Ovary (tissue), 10 donors: ENCODE measurements at regions of chr3 and their contacts with region 1.

Region 1: GRCh38 chr3:16600780-16601539 is 4.3 kb downstream of the DAZL start:
- DNase-seq: peak; percentile 72 to 88 (median 85)
- H3K4me3 ChIP-seq: no peak overlapping the region
- H3K27ac ChIP-seq: no peak overlapping the region
- H3K4me1 ChIP-seq: no peaks in the 10 kb centered on the region
- H3K27me3 ChIP-seq: no peaks in the 10 kb centered on the region
- CTCF ChIP-seq: peak; percentile 71 to 85 (median 83)
- EP300 ChIP-seq: no peak
- POLR2A ChIP-seq: no peak

Region 2: GRCh38 chr3:16668776-16669545 is 68.0 kb after region 1 on chr3:
- intact Hi-C with region 1: no loop called
- DNase-seq: no peak
- H3K4me3 ChIP-seq: no peak overlapping the region
- H3K27ac ChIP-seq: no peak overlapping the region
- H3K4me1 ChIP-seq: peaks cover under 1% of the 10 kb centered on the region
- H3K27me3 ChIP-seq: no peaks in the 10 kb centered on the region
- CTCF ChIP-seq: no peak
- EP300 ChIP-seq: no peak
- POLR2A ChIP-seq: no peak

Region 3: DNA sequence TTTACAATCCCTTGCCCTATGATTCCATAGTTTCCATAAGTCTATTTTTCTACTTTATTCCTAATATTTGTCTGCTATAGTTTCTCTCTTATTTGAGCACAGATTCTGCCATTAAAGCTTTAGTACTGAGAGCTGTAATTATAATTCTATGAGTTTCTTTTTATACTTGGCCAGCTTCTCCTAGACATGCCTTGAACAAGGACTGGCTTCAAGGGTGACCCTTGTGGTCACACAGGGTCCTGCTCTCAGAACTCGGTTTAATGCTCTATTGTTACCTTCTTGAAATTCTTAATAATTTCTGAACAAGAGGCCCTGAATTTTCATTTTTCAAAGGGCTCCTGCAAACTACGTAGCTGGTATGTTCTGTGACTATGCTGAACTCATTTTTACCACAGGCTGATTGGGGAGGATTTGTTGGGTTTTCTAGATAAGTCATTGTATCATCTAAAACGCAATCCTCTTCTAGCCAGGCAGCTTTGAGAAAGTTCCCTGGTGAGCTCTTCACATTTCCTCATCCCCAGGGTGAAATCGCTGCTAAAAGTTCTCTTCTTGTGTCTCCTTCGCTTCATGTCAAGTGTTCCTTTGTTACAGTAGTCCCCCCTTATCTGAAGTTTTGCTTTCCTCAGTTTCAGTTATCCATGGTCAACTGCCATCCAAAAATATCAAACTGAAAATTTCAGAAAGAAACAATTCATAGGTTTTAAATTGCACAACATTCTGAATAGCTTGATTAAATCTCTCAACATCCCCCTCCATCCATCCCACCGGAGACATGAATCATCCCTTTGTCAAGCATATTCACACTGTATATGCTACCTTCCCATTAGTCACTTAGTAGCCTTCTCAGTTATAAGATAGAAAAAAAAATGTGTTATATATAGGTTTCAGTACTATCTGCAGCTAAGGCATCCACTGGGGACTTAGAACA is 271.2 kb after region 1 on chr3:
- intact Hi-C with region 1: no loop called
- DNase-seq: no peak
- H3K4me3 ChIP-seq: no peak overlapping the region
- H3K27ac ChIP-seq: no peak overlapping the region
- H3K4me1 ChIP-seq: no peaks in the 10 kb centered on the region
- H3K27me3 ChIP-seq: no peaks in the 10 kb centered on the region
- CTCF ChIP-seq: no peak
- EP300 ChIP-seq: no peak
- POLR2A ChIP-seq: no peak

Region 4: DNA sequence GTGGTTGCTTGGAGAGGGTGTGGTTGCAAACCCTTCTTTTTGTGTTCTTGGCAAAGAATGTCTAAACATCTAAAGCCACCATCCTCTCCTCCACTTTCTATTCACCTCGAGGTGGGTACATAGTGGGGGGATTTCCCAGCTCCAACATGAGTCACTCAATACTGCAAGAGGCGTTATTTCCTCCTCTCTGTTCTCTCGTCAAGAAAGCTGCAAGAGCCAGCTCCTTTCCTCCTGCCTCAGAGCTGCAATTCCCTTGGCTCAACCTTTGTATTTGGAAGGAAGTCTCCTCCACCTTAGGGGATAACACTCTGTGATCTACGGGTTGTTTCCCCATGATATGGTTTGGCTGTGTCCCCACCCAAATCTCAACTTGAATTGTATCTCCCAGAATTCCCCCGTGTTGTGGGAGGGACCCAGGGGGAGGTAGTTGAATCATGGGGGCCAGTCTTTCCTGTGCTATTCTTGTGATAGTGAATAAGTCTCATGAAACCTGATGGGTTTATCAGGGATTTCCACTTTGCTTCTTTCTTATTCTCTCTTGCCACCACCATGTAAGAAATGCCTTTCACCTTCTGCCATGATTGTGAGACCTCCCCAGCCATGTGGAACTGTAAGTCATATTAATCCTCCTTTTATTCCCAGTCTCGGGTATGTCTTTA is 422.2 kb after region 1 on chr3:
- intact Hi-C with region 1: loop called in 1 of 4 experiments (anchors 10 kb)
- DNase-seq: no peak
- H3K4me3 ChIP-seq: no peak overlapping the region
- H3K27ac ChIP-seq: no peak overlapping the region
- H3K4me1 ChIP-seq: no peaks in the 10 kb centered on the region
- H3K27me3 ChIP-seq: no peaks in the 10 kb centered on the region
- CTCF ChIP-seq: no peak
- EP300 ChIP-seq: no peak
- POLR2A ChIP-seq: no peak

Region 5: DNA sequence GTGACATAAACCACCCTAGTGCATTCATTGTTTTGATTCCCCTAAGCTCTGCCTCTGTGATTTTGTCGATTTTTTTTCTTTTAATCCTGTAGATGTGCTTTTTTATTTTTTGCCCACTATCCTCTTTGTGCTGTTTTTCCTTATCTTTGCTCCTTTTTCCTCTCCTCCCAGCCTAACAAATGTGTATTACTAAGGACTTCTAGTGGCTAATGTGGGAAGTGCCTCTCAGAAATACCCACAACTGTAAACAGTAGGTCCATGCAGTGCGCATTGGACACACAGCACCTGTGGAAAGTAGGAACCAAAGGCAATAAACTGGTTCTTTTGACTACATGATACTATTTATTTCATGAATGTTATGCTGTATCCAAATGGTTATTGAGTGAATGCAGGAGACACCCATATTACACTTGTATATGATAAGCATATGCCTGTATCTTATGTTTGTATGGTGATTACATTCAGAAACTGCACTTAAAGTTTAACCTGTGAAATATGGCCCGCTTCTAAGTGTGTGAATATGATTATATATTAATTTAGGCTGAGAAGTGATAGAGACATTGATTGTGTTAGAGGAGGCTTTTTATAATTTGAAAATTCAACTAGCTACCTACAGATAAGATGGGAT is 431.6 kb after region 1 on chr3:
- intact Hi-C with region 1: loop called in 3 of 4 experiments (anchors 5 to 10 kb)
- DNase-seq: no peak
- H3K4me3 ChIP-seq: no peak overlapping the region
- H3K27ac ChIP-seq: no peak overlapping the region
- H3K4me1 ChIP-seq: peaks cover 4% of the 10 kb centered on the region
- H3K27me3 ChIP-seq: no peaks in the 10 kb centered on the region
- CTCF ChIP-seq: peak in 2 of 3 donors; percentile 78 to 83
- EP300 ChIP-seq: no peak
- POLR2A ChIP-seq: no peak